ENCODE measurements at regions of chr16 and their contacts with region 1.

Region 1: DNA sequence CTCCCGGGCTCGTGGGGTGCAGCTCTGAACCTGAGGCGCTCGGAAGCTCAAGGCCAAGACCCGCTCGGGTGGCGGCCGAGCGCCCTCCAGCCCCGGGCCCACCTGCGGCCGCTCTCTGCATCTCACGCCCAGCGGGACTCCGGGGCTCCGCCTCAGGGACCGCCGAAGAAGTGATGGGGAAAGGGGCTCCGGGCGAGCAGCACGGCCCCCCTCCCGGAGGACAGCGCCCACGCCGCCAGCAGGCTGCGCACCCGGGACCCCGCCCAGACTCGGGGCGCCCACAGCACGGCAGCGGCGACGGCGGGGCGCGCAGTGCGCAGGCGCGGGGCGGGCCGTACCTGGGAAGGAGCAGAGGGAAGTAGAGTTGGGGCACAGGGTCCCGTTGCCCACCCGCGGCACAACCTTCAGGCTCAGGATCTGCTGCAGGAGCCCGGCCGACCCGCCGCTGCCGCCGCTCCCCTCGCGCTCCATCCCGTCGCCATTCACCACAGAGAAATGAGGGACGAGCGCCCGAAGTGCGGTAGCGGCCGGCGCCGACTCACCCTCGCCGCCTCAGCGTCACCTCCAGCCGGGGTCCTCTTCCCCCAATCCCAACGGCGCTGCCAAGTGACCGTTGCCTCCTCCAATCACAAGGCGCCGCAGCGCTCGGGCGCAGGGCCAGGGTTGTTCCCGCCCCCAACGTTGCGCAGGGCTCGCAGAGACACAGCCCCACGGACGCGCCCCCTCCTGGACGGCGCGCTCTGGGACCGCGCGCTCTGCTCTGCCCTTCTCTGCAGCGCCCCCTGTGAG is at the start of gene TMEM170A:
- DNase-seq: peak; percentile 98
- ATAC-seq: peak; percentile 95
- H3K4me3 Mint-ChIP-seq: peak within 1 kb of the TSS; percentile 92
- H3K27ac Mint-ChIP-seq: peak within 1 kb of the TSS; percentile 89
- H3K4me1 Mint-ChIP-seq: peaks cover 41% of the 10 kb centered on the region
- H3K27me3 Mint-ChIP-seq: no peaks in the 10 kb centered on the region
- CTCF ChIP-seq: peak; percentile 99
- total RNA-seq, gene TMEM170A: 25.3 and 28.3 TPM in 2 replicates

Region 2: GRCh38 chr16:74666425-74667254 is 797.7 kb before region 1 on chr16 and contains the start of gene RFWD3:
- CTCF ChIA-PET with region 1: no interaction called
- POLR2A ChIA-PET with region 1: no interaction called
- intact Hi-C with region 1: loop called (anchors 2 kb)
- DNase-seq: peak; percentile 78
- ATAC-seq: peak; percentile 99
- H3K4me3 Mint-ChIP-seq: peak within 1 kb of the TSS; percentile 94
- H3K27ac Mint-ChIP-seq: peak within 1 kb of the TSS; percentile 90
- H3K4me1 Mint-ChIP-seq: peaks cover 38% of the 10 kb centered on the region
- H3K27me3 Mint-ChIP-seq: no peaks in the 10 kb centered on the region
- CTCF ChIP-seq: no peak
- total RNA-seq, gene RFWD3: 57.9 and 63.2 TPM in 2 replicates

Region 3: DNA sequence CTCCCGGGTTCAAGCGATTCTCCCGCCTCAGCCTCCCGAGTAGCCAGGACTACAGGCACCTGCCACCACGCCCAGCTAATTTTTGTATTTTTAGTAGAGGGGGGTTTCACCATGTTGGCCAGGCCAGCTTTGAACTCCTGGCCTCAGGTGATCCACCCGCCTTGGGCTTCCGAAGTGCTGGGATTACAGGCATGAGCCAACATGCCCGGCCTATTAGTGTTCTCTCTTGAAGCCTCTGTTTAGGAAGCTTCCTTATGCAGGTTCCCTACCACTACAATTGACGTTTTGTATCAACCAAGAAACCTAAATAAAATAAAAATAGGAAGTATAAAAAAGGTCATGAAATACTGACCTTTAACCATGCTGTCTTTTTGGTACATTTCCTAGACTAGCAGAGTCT is 55.6 kb after region 1 on chr16:
- CTCF ChIA-PET with region 1: interaction called, 4 read pairs
- POLR2A ChIA-PET with region 1: interaction called, 9 read pairs
- intact Hi-C with region 1: loop called (anchors 1 kb)
- DNase-seq: no peak
- ATAC-seq: no peak
- H3K4me3 Mint-ChIP-seq: no peak overlapping the region
- H3K27ac Mint-ChIP-seq: no peak overlapping the region
- H3K4me1 Mint-ChIP-seq: peaks cover 13% of the 10 kb centered on the region
- H3K27me3 Mint-ChIP-seq: no peaks in the 10 kb centered on the region
- CTCF ChIP-seq: no peak

Region 4: GRCh38 chr16:75622761-75623605 is 158.7 kb after region 1 on chr16 and contains the start of gene ADAT1:
- CTCF ChIA-PET with region 1: interaction called, 3 read pairs
- POLR2A ChIA-PET with region 1: interaction called, 5 read pairs
- intact Hi-C with region 1: loop called (anchors 1 kb)
- DNase-seq: peak; percentile 93
- ATAC-seq: peak; percentile 97
- H3K4me3 Mint-ChIP-seq: peak within 1 kb of the TSS; percentile 98
- H3K27ac Mint-ChIP-seq: peak within 1 kb of the TSS; percentile 95
- H3K4me1 Mint-ChIP-seq: peaks cover 22% of the 10 kb centered on the region
- H3K27me3 Mint-ChIP-seq: no peaks in the 10 kb centered on the region
- CTCF ChIP-seq: no peak
- total RNA-seq, gene ADAT1: 52.7 and 57.2 TPM in 2 replicates

Region 5: GRCh38 chr16:77211880-77212740 is 1747.8 kb after region 1 on chr16:
- CTCF ChIA-PET with region 1: no interaction called
- POLR2A ChIA-PET with region 1: no interaction called
- intact Hi-C with region 1: loop called (anchors 5 kb)
- DNase-seq: peak; percentile 63
- ATAC-seq: peak; percentile 71
- H3K4me3 Mint-ChIP-seq: peak overlapping the region; percentile 89
- H3K27ac Mint-ChIP-seq: peak overlapping the region; percentile 37
- H3K4me1 Mint-ChIP-seq: peaks cover 9% of the 10 kb centered on the region
- H3K27me3 Mint-ChIP-seq: no peaks in the 10 kb centered on the region
- CTCF ChIP-seq: no peak

Measured in activated B cell treated with CpG ODN at 0.5 μM for 24 hours (primary cell).